ENCODE measurements at regions of chr2 and their contacts with region 1.

Region 1: DNA sequence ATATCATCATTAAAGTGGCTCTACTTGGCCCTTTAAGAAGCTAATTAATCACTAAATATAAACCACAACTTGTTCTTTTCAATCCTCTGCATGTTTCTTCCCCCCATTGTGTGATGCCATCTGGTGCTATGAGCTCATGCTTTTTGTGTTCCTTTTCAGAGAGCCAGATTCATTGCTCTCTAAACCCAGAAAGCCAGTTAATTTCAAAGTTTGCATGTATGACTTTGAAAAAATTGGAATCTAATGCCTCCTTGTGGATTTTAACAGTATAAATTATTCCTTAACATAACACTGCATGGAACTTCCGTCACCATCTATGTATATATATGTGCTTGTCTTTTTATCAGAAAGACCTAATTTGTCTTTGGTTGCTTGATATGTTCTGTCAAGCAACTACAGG is 31.1 kb downstream of the TMEM178A start:
- DNase-seq: peak; percentile 79
- H3K4me3 ChIP-seq: no peak overlapping the region
- H3K27ac ChIP-seq: no peak overlapping the region
- H3K4me1 ChIP-seq: peaks cover 10% of the 10 kb centered on the region
- H3K27me3 ChIP-seq: no peaks in the 10 kb centered on the region
- CTCF ChIP-seq: peak; percentile 56

Region 2: GRCh38 chr2:39379643-39380524 is 317.0 kb before region 1 on chr2:
- CTCF ChIA-PET with region 1: interaction called, 4 read pairs
- POLR2A ChIA-PET with region 1: no interaction called
- intact Hi-C with region 1: loop called (anchors 10 kb)
- DNase-seq: peak; percentile 63
- H3K4me3 ChIP-seq: no peak overlapping the region
- H3K27ac ChIP-seq: no peak overlapping the region
- H3K4me1 ChIP-seq: peaks cover 17% of the 10 kb centered on the region
- H3K27me3 ChIP-seq: no peaks in the 10 kb centered on the region
- CTCF ChIP-seq: peak; percentile 72

Region 3: GRCh38 chr2:39408316-39409136 is 288.3 kb before region 1 on chr2:
- CTCF ChIA-PET with region 1: interaction called, 13 read pairs
- POLR2A ChIA-PET with region 1: no interaction called
- intact Hi-C with region 1: no loop called
- DNase-seq: peak; percentile 41
- H3K4me3 ChIP-seq: no peak overlapping the region
- H3K27ac ChIP-seq: peak overlapping the region; percentile 21
- H3K4me1 ChIP-seq: peaks cover 58% of the 10 kb centered on the region
- H3K27me3 ChIP-seq: no peaks in the 10 kb centered on the region
- CTCF ChIP-seq: no peak